Pancreas (tissue), 10 donors: ENCODE measurements at regions of chr9 and their contacts with region 1.

Region 1: DNA sequence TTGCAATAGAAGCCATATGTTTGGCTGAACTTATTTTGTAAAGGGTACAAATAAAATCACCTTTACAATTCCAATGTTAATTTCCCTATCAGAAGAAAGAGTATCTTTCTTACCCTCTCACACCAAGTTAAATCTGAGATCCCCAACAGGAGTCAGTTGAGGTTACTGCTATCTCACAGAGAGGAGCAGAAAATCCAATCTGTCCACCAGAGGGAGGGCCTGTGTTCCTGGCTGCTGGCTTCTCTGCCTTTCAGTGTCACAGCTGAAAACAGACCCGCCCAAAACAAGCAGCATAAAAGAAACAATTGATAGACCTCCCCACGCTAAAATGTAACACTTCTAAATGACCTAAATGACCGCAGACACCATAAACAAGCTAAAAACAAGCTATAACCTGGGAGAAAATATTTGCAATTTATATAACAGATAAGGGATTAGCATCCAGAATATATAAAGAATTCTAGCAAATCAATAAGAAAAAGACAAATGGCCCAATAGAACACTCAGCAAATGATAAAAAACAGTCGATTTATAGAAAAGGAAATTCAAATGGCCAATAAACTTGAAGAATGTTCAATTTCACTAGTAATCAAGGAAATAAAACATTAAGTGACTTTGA is 24.5 kb upstream of the MVB12B start:
- DNase-seq: peak in 2 of 6 donors; percentile 11 to 38
- ATAC-seq: peak in 3 of 4 donors; percentile 72 to 82 (median 76)
- H3K4me3 ChIP-seq: no peak overlapping the region
- H3K27ac ChIP-seq: no peak overlapping the region
- H3K4me1 ChIP-seq: no peaks in the 10 kb centered on the region
- H3K27me3 ChIP-seq: no peaks in the 10 kb centered on the region
- CTCF ChIP-seq: peak in 3 of 4 donors; percentile 20 to 47 (median 28)

Region 2: GRCh38 chr9:126261584-126262356 is 40.3 kb before region 1 on chr9:
- intact Hi-C with region 1: no loop called
- DNase-seq: no peak
- ATAC-seq: no peak
- H3K4me3 ChIP-seq: no peak overlapping the region
- H3K27ac ChIP-seq: no peak overlapping the region
- H3K4me1 ChIP-seq: no peaks in the 10 kb centered on the region
- H3K27me3 ChIP-seq: peaks cover 0 to 24% (median 6%) of the 10 kb centered on the region in 4 donors
- CTCF ChIP-seq: no peak

Region 3: GRCh38 chr9:126386088-126386487 is 84.0 kb after region 1 on chr9:
- intact Hi-C with region 1: no loop called
- DNase-seq: no peak
- ATAC-seq: peak in 1 of 4 donors; percentile 35
- H3K4me3 ChIP-seq: no peak overlapping the region
- H3K27ac ChIP-seq: no peak overlapping the region
- H3K4me1 ChIP-seq: no peaks in the 10 kb centered on the region
- H3K27me3 ChIP-seq: no peaks in the 10 kb centered on the region
- CTCF ChIP-seq: no peak

Region 4: GRCh38 chr9:126398403-126399058 is 96.4 kb after region 1 on chr9:
- intact Hi-C with region 1: loop called in 1 of 3 experiments (anchors 5 kb)
- DNase-seq: peak; percentile 54 to 96 (median 78)
- ATAC-seq: peak; percentile 89 to 98 (median 96)
- H3K4me3 ChIP-seq: no peak overlapping the region
- H3K27ac ChIP-seq: no peak overlapping the region
- H3K4me1 ChIP-seq: no peaks in the 10 kb centered on the region
- H3K27me3 ChIP-seq: no peaks in the 10 kb centered on the region
- CTCF ChIP-seq: peak; percentile 83 to 96 (median 89)

Region 5: GRCh38 chr9:126482361-126483044 is 180.4 kb after region 1 on chr9:
- intact Hi-C with region 1: loop called in 1 of 3 experiments (anchors 10 kb)
- DNase-seq: no peak
- ATAC-seq: no peak
- H3K4me3 ChIP-seq: no peak overlapping the region
- H3K27ac ChIP-seq: no peak overlapping the region
- H3K4me1 ChIP-seq: no peaks in the 10 kb centered on the region
- H3K27me3 ChIP-seq: no peaks in the 10 kb centered on the region
- CTCF ChIP-seq: no peak

Region 6: GRCh38 chr9:126599047-126599650 is 297.1 kb after region 1 on chr9:
- intact Hi-C with region 1: no loop called
- DNase-seq: no peak
- ATAC-seq: no peak
- H3K4me3 ChIP-seq: no peak overlapping the region
- H3K27ac ChIP-seq: no peak overlapping the region
- H3K4me1 ChIP-seq: no peaks in the 10 kb centered on the region
- H3K27me3 ChIP-seq: no peaks in the 10 kb centered on the region
- CTCF ChIP-seq: no peak